Dorsolateral prefrontal cortex (tissue), 120 donors: ENCODE measurements at regions of chr12 and their contacts with region 1.

Region 1: GRCh38 chr12:92145731-92146496 is at the start of gene BTG1:
- DNase-seq: peak; percentile 97 to 100 (median 100)
- H3K4me3 ChIP-seq: peak within 1 kb of the TSS; percentile 66 to 99 (median 93)
- H3K27ac ChIP-seq: peak within 1 kb of the TSS; percentile 86 to 100 (median 98)
- H3K27me3 ChIP-seq: no peaks in the 10 kb centered on the region
- CTCF ChIP-seq: peak in 21 of 56 donors; percentile 7 to 55 (median 26)
- total RNA-seq, gene BTG1: 23.7 to 85.7 (median 42.5) TPM

Region 2: GRCh38 chr12:91577586-91578539 is 568.1 kb before region 1 on chr12:
- intact Hi-C with region 1: loop called in 1 of 2 experiments (anchors 10 kb)
- DNase-seq: no peak
- H3K4me3 ChIP-seq: peak overlapping the region in 53 of 59 donors; percentile 1 to 57 (median 31)
- H3K27ac ChIP-seq: peak overlapping the region in 55 of 59 donors; percentile 5 to 98 (median 72)
- H3K27me3 ChIP-seq: no peaks in the 10 kb centered on the region
- CTCF ChIP-seq: peak; percentile 44 to 90 (median 72)

Region 3: GRCh38 chr12:92034858-92035401 is 111.0 kb before region 1 on chr12:
- intact Hi-C with region 1: loop called in 1 of 2 experiments (anchors 10 kb)
- DNase-seq: peak in 9 of 10 donors; percentile 34 to 73 (median 47)
- H3K4me3 ChIP-seq: peak overlapping the region in 55 of 59 donors; percentile 5 to 58 (median 37)
- H3K27ac ChIP-seq: peak overlapping the region in 38 of 59 donors; percentile 1 to 76 (median 37)
- H3K27me3 ChIP-seq: no peaks in the 10 kb centered on the region
- CTCF ChIP-seq: no peak

Region 4: GRCh38 chr12:92185052-92185451 is 39.1 kb after region 1 on chr12:
- intact Hi-C with region 1: no loop called
- DNase-seq: no peak
- H3K4me3 ChIP-seq: no peak overlapping the region
- H3K27ac ChIP-seq: no peak overlapping the region
- H3K27me3 ChIP-seq: no peaks in the 10 kb centered on the region
- CTCF ChIP-seq: no peak

Region 5: GRCh38 chr12:92570056-92570753 is 424.3 kb after region 1 on chr12:
- intact Hi-C with region 1: loop called (anchors 2 to 5 kb)
- DNase-seq: peak in 4 of 10 donors; percentile 48 to 81 (median 64)
- H3K4me3 ChIP-seq: peak overlapping the region in 29 of 59 donors; percentile 3 to 54 (median 27)
- H3K27ac ChIP-seq: peak overlapping the region in 29 of 59 donors; percentile 1 to 82 (median 37)
- H3K27me3 ChIP-seq: no peaks in the 10 kb centered on the region
- CTCF ChIP-seq: peak; percentile 83 to 99 (median 93)